SK-N-SH (cell line): ENCODE measurements at regions of chr16 and their contacts with region 1.

Region 1: DNA sequence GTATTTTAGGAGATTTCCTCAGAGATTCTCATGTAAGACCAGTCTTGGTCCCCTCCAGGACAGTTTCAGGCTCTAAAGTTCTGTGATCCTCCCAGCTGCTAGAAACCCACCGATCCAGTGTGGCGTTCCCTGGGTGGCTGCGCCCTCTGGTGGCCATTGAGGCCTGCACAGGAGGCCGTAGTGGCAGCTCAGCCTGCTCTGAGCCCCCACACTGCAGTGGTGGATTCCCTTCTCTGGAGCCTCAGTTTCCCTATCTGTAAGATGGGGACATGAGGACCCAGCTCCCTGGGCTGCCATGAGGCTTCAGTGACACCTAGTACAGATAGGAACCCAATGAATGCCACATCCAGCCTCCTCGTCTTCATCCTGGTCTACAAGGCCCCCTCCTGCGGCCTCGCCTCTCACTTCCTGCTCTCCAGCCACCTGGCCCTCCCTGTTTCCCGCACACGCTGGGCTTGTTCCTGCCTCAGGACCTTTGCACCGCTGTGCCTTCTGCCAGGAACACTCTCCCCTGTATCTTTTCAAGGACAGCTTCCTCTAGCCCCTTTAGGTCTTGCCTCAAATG is 16.5 kb downstream of the CCDC102A start:
- DNase-seq: peak; percentile 94
- H3K4me3 ChIP-seq: no peak overlapping the region
- H3K27ac ChIP-seq: 0 out of 4 replicates have a peak overlapping the region, but pooled peaks of 1 of the 2 experiments have one; percentile 16
- H3K4me1 ChIP-seq: peaks cover 0 to 16% of the 10 kb centered on the region in 2 experiments; a peak in 1 of 4 replicates
- H3K27me3 ChIP-seq: no peaks in the 10 kb centered on the region
- CTCF ChIP-seq: peak; percentile 98
- EP300 ChIP-seq: no peak
- RAD21 ChIP-seq: peak; percentile 96

Region 2: DNA sequence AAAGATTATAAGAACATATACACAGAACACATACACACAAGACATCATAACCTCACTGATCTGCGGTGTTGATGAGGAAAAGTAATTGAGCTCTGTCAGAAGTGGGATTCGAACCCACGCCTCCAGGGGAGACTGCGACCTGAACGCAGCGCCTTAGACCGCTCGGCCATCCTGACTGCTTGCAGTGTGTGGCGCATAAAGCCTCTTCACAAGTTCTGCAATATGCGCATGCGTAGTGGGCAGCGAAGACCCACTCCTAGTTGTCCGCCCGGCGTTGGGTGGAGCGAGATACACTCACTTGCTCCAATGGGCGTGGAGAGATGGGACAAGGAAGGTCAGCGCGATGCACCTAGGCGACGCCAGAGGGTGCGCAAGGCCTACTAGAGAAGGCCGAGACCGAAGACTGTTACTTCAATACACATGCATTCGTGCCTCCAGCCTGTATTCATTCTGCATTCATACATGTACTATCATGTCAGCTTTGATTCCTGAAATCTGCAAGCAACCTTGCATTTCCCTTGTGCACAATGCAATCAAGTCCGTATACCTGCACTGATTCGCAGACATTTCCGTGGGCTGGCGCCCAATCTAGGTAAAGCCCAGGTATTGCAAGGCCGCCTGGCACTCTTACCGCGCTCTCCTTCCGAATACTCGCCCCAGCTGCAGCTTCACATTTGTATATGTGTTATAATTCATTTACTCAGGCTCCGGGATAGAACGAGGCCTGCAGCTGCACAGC is 219.3 kb before region 1 on chr16:
- CTCF ChIA-PET with region 1: interaction called, 14 read pairs
- POLR2A ChIA-PET with region 1: no interaction called
- DNase-seq: peak; percentile 93
- H3K4me3 ChIP-seq: peak overlapping the region; percentile 56 to 62
- H3K27ac ChIP-seq: peak overlapping the region; percentile 76 to 87
- H3K4me1 ChIP-seq: peaks cover 0 to 7% of the 10 kb centered on the region in 2 experiments; a peak in 1 of 4 replicates
- H3K27me3 ChIP-seq: no peaks in the 10 kb centered on the region
- CTCF ChIP-seq: peak; percentile 97
- EP300 ChIP-seq: no peak; a peak in 1 of 4 replicates
- RAD21 ChIP-seq: peak; percentile 100

Region 3: GRCh38 chr16:57432989-57433388 is 86.9 kb before region 1 on chr16:
- CTCF ChIA-PET with region 1: interaction called, 12 read pairs
- POLR2A ChIA-PET with region 1: no interaction called
- DNase-seq: no peak
- H3K4me3 ChIP-seq: no peak overlapping the region
- H3K27ac ChIP-seq: no peak overlapping the region
- H3K4me1 ChIP-seq: no peaks in the 10 kb centered on the region
- H3K27me3 ChIP-seq: no peaks in the 10 kb centered on the region
- CTCF ChIP-seq: no peak
- EP300 ChIP-seq: no peak
- RAD21 ChIP-seq: no peak

Region 4: GRCh38 chr16:57462209-57462977 is 57.5 kb before region 1 on chr16 and contains the start of gene POLR2C:
- CTCF ChIA-PET with region 1: interaction called, 218 read pairs
- POLR2A ChIA-PET with region 1: interaction called, 11 read pairs
- DNase-seq: peak; percentile 92
- H3K4me3 ChIP-seq: peak within 1 kb of the TSS; percentile 72 to 97
- H3K27ac ChIP-seq: peak within 1 kb of the TSS; percentile 12 to 89; a peak in 2 of 4 replicates
- H3K4me1 ChIP-seq: peaks cover 8 to 13% of the 10 kb centered on the region in 2 experiments; a peak in 1 of 4 replicates
- H3K27me3 ChIP-seq: no peaks in the 10 kb centered on the region
- CTCF ChIP-seq: peak; percentile 85
- EP300 ChIP-seq: no peak; a peak in 1 of 4 replicates
- RAD21 ChIP-seq: peak; percentile 49
- polyA plus RNA-seq, gene POLR2C: 160 and 178 TPM in 2 replicates

Region 5: DNA sequence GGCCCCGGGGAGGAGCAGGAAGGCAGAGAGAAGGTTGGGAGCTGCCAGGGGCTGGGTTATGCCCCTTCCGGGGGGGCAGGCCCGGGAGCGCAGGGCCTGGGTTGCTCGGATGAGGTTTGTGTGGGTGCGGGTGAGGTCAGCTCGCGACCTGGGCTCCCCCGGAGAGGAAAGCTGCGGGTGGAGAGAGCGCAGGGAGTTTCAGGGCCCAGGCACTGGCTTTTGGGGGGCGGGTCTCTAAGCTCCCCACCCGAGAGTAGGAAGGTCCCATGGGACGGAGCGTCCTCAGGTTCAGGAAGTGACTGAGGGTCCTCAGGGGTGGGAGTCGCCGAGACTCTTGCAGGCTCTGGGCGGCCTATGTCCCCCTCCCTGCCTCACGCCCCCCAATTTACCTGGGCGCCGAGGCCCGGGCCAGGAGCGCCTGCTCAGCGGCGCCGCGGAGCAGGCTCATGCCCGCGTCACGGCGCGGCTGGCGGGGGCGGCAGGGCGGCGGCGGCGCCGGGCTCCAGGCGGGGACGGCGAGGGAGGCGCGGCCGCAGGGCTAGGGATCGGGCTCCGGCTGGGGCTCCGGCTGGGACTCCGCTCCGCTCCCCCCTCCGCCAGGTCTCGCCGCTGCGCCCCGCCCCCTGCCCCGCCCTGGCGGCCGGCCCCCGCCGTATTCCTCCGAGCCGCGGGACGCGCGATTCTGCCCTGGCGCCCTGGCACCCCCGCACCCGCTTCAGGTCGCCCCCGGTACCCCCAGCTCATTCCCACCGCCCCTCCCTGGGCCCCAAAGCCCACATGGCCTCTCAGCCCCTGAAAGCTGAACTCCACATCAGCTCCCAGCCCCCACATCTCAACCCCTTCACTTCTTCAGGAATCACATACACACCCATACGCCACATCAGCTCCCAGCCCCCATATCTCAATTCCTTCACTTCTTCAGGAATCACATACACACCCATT is 33.7 kb before region 1 on chr16 and contains the start of gene DOK4:
- CTCF ChIA-PET with region 1: interaction called, 354 read pairs
- POLR2A ChIA-PET with region 1: interaction called, 9 read pairs
- DNase-seq: peak; percentile 98
- H3K4me3 ChIP-seq: peak within 1 kb of the TSS; percentile 67 to 83
- H3K27ac ChIP-seq: peak within 1 kb of the TSS in 1 of 2 experiments; percentile 94; a peak in 2 of 4 replicates
- H3K4me1 ChIP-seq: peaks cover 0 to 42% of the 10 kb centered on the region in 2 experiments; a peak in 1 of 4 replicates
- H3K27me3 ChIP-seq: no peaks in the 10 kb centered on the region
- CTCF ChIP-seq: no peak
- EP300 ChIP-seq: no peak
- RAD21 ChIP-seq: no peak
- polyA plus RNA-seq, gene DOK4: 28.4 and 36.9 TPM in 2 replicates

Region 6: DNA sequence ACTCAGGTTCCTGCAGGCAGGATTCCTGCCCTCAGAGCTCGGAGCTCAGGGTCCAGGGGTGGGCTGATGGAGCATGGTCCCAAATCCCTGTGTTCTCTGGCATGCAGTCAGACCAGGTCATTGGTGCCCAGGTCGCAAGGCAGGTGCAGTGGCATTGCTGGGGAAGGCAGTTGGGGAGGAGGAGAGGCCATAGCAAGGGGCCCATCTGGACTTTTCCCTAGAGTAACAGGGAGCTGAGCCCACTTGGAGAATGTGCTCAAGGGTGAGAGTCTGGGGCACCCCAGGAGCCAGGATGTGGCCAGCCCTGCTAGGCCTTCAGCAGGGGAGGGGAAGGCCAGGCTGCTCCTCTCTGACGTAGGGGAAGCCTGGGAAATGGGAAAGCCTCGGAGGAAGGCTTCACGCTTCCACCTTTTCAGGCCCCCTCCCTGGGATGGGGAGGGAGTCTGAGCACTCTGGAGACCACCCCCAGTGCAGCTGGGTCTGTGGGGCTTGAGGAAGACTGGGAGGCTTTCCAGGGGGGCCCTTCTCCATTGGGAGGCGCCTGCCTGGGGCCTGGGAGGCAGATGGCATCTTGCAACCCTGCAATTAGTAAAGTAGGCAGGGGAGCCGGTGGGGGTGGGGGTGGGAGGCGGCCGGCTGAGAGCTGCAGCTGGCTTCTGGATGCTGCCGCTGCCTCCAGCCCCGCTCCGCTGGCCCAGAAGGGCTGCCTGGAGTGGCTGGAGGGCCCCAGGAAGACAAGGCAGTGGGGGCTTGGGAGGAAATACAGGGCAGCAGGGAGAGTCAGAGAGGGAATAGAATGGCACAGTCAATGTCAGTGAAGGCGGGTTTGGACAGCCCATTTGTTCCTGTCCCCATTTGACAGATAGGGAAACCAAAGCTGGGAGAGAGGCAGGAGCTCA is 12.5 kb before region 1 on chr16:
- CTCF ChIA-PET with region 1: interaction called, 34 read pairs
- POLR2A ChIA-PET with region 1: interaction called, 4 read pairs
- DNase-seq: peak; percentile 82
- H3K4me3 ChIP-seq: no peak overlapping the region
- H3K27ac ChIP-seq: peak overlapping the region in 1 of 2 experiments; percentile 99; a peak in 3 of 4 replicates
- H3K4me1 ChIP-seq: peaks cover 0 to 56% of the 10 kb centered on the region in 2 experiments; a peak in 1 of 4 replicates
- H3K27me3 ChIP-seq: no peaks in the 10 kb centered on the region
- CTCF ChIP-seq: no peak
- EP300 ChIP-seq: 0 out of 4 replicates have a peak, but pooled peaks of 1 of the 2 experiments have one; percentile 24
- RAD21 ChIP-seq: no peak

Region 7: GRCh38 chr16:57535680-57536305 is 15.9 kb after region 1 on chr16:
- CTCF ChIA-PET with region 1: interaction called, 27 read pairs
- POLR2A ChIA-PET with region 1: no interaction called
- DNase-seq: peak; percentile 99
- H3K4me3 ChIP-seq: peak overlapping the region; percentile 70 to 90
- H3K27ac ChIP-seq: peak overlapping the region; percentile 70 to 81
- H3K4me1 ChIP-seq: peaks cover 19 to 41% of the 10 kb centered on the region in 2 experiments; a peak in 3 of 4 replicates
- H3K27me3 ChIP-seq: no peaks in the 10 kb centered on the region
- CTCF ChIP-seq: no peak
- EP300 ChIP-seq: no peak
- RAD21 ChIP-seq: no peak

Region 8: GRCh38 chr16:57976331-57976796 is 456.5 kb after region 1 on chr16:
- CTCF ChIA-PET with region 1: no interaction called
- POLR2A ChIA-PET with region 1: no interaction called
- DNase-seq: no peak
- H3K4me3 ChIP-seq: no peak overlapping the region
- H3K27ac ChIP-seq: no peak overlapping the region
- H3K4me1 ChIP-seq: no peaks in the 10 kb centered on the region
- H3K27me3 ChIP-seq: no peaks in the 10 kb centered on the region; the same call in 1 of the 2 replicates
- CTCF ChIP-seq: no peak
- EP300 ChIP-seq: no peak
- RAD21 ChIP-seq: no peak